Heart right ventricle (tissue), 16 donors: ENCODE measurements at regions of chr6 and their contacts with region 1.

Region 1: DNA sequence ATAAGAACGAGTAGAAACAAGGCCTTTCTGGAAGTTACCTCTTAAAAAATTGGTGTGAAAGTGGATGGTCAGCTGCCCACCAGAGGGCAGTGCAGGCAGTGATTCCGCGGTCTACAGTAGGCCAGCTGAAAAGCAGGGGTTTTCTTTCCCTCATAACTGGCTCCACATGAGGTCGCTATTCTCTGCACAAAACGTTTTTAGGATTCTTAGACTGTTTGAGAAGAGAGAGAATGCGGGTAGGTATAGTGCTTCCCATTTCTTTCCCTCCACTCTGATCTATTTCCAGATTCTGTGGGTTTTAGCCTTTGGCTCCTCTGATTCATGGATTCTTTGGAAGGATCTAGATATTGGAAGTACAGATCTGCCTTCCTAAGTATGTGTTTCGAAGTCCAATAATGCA is 14.2 kb downstream of the FIG4 start:
- DNase-seq: peak; percentile 75 to 81
- ATAC-seq: peak; percentile 92 to 96 (median 94)
- H3K4me3 ChIP-seq: no peak overlapping the region
- H3K27ac ChIP-seq: no peak overlapping the region
- H3K4me1 ChIP-seq: peaks cover 0 to 47% (median 3%) of the 10 kb centered on the region in 9 donors
- H3K27me3 ChIP-seq: no peaks in the 10 kb centered on the region
- CTCF ChIP-seq: peak; percentile 92 to 99 (median 97)

Region 2: DNA sequence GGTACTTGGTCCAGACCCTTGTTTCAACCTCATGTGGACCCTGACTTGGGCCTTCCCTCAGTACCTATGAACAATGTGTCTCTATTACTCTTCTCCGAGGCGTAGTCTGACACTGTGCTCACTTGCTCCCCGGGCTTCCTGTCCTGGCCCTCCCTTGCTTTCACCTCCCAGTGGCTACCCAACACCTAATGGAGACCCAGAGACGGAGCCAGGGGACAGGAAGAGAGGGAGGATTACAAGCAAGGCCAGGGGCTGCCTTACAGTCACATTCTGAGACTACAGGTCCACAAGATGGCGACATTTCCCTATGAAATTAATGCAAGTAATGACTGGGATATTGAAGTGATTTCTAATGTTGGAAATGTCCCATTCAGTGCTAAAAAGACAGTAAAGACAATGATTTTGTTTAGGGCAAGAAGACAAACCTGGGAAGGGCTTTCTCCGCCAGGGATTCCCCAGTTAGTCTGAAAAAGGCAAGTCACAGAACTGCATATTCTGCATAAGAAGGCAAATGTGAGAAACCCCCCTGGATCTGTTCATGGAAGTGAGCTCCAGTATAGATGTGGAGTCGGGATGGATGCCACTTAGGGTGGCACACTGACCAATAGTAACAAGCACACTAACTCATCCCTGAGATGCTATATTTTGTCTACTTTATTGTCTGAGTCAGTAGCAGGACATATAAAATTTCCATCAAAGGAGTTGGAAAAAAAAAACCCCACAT is 178.2 kb before region 1 on chr6:
- intact Hi-C with region 1: loop called in 2 of 10 experiments (anchors 5 to 10 kb)
- DNase-seq: peak in 1 of 2 donors; percentile 37
- ATAC-seq: peak in 6 of 8 donors; percentile 29 to 72 (median 55)
- H3K4me3 ChIP-seq: no peak overlapping the region
- H3K27ac ChIP-seq: no peak overlapping the region
- H3K4me1 ChIP-seq: no peaks in the 10 kb centered on the region
- H3K27me3 ChIP-seq: no peaks in the 10 kb centered on the region
- CTCF ChIP-seq: peak in 8 of 9 donors; percentile 44 to 71 (median 58)

Region 3: GRCh38 chr6:109783250-109783986 is 78.2 kb after region 1 on chr6:
- intact Hi-C with region 1: loop called in 4 of 10 experiments (anchors 1 to 10 kb)
- DNase-seq: no peak
- ATAC-seq: peak in 1 of 8 donors; percentile 25
- H3K4me3 ChIP-seq: no peak overlapping the region
- H3K27ac ChIP-seq: no peak overlapping the region
- H3K4me1 ChIP-seq: no peaks in the 10 kb centered on the region
- H3K27me3 ChIP-seq: no peaks in the 10 kb centered on the region
- CTCF ChIP-seq: peak in 7 of 9 donors; percentile 11 to 48 (median 36)

Region 4: DNA sequence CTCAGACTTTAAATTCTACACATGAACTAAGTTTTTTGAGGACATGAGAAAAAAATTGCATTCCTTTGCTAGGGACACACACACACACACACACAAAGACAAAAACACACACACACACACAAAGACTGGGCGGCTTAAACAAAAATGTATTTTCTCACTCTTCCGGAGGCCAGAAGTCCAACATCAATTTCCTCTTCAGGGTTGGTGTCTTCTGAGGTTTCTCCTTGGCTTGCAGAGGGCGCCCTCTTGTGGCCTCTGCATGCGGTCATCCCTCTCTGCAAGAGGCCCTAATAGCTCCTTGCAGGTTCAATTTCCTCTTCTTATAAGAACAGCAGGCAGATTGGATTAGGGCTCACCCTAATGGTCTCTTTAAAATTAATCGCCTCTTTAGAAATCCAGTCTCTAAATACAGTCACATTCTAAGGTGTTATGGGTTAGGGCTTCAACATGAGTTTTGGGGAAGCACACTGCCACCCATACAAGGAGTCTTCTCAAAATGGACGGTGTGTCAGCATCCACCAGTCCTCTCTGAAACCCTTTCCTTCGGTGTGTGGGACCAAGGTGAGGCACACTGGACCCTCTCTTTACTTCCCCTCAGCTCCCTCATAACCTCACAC is 334.2 kb after region 1 on chr6:
- intact Hi-C with region 1: loop called (anchors 1 to 5 kb)
- DNase-seq: peak; percentile 82 to 83
- ATAC-seq: peak; percentile 84 to 95 (median 92)
- H3K4me3 ChIP-seq: peak overlapping the region in 7 of 10 donors; percentile 4 to 48 (median 28)
- H3K27ac ChIP-seq: peak overlapping the region in 1 of 10 donors; percentile 76
- H3K4me1 ChIP-seq: peaks cover 0 to 15% (median 5%) of the 10 kb centered on the region in 9 donors
- H3K27me3 ChIP-seq: peaks cover 0 to 4% (median 0%) of the 10 kb centered on the region in 7 donors
- CTCF ChIP-seq: peak; percentile 73 to 96 (median 90)

Region 5: GRCh38 chr6:110053395-110054240 is 348.4 kb after region 1 on chr6:
- intact Hi-C with region 1: loop called in 2 of 10 experiments (anchors 5 kb)
- DNase-seq: peak in 1 of 2 donors; percentile 25
- ATAC-seq: peak in 6 of 8 donors; percentile 34 to 62 (median 58)
- H3K4me3 ChIP-seq: no peak overlapping the region
- H3K27ac ChIP-seq: no peak overlapping the region
- H3K4me1 ChIP-seq: no peaks in the 10 kb centered on the region
- H3K27me3 ChIP-seq: peaks cover 0 to 16% (median 0%) of the 10 kb centered on the region in 7 donors
- CTCF ChIP-seq: peak; percentile 34 to 81 (median 74)

Region 6: DNA sequence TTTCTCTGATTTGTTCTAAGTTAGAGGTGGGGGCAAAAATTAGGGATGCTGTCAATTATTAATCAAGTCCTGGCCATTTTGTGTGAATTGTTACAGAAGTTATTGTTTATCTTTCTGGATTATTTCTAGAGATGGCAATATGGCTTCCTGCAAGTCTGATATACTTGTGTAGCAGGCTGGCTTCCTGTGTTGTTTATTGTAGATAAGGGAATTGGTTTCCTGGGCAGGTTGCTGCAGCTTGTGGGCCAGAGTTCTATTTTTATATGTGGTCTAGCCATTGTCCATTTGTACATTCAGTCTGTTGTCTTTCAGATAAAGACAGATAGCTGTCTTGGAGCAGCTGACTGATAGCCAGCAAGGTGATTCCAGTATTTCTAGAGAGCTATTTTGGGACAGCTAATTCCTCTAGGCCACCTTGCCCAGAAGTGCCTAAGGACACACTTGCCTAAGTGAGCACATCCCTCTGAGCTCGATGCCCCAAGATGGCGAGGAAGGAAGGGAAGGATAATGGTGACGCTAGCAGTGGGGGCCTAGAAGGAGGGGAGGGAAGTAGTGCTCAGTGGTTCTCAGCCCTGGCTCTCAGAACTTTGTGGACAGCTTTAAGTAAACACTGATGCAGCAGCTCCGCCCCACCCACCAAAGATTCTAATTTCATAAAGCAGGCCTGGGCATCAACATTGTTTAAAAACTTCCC is 684.6 kb after region 1 on chr6:
- intact Hi-C with region 1: loop called in 9 of 10 experiments (anchors 5 to 10 kb)
- DNase-seq: no peak
- ATAC-seq: peak in 3 of 8 donors; percentile 32 to 63 (median 40)
- H3K4me3 ChIP-seq: no peak overlapping the region
- H3K27ac ChIP-seq: peak overlapping the region in 1 of 10 donors; percentile 3
- H3K4me1 ChIP-seq: peaks cover 0 to 18% (median 7%) of the 10 kb centered on the region in 9 donors
- H3K27me3 ChIP-seq: no peaks in the 10 kb centered on the region
- CTCF ChIP-seq: no peak

Region 7: DNA sequence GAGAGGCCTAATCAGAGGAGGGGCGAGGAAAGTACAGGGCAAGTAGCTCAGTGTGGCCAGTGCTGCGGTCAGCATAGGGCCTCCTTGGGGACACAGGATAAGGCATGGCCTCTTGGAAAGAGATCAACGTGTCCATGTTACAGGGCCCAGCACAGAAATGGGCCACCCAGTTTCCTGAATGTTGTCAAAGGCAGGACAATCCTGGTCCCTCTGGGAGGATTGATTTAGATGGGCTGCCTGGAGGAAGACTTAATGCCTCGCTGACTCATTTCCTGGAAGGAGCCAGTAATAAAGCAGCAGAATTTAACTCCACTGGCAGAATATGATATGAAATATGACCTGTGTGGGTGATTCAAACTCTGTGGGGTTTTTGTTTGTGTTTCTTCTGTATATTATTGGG is 693.5 kb after region 1 on chr6:
- intact Hi-C with region 1: loop called in 6 of 10 experiments (anchors 5 to 10 kb)
- DNase-seq: no peak
- ATAC-seq: peak in 1 of 8 donors; percentile 57
- H3K4me3 ChIP-seq: no peak overlapping the region
- H3K27ac ChIP-seq: no peak overlapping the region
- H3K4me1 ChIP-seq: peaks cover 0 to 19% (median 14%) of the 10 kb centered on the region in 9 donors
- H3K27me3 ChIP-seq: no peaks in the 10 kb centered on the region
- CTCF ChIP-seq: no peak